ENCODE measurements at regions of chr12 and their contacts with region 1.

Region 1: GRCh38 chr12:124044809-124045321 is 71.8 kb downstream of the ZNF664 start:
- DNase-seq: peak in 1 of 2 donors; percentile 44
- H3K4me3 ChIP-seq: no peak overlapping the region
- H3K27ac ChIP-seq: no peak overlapping the region
- H3K4me1 ChIP-seq: peaks cover 0 to 8% (median 0%) of the 10 kb centered on the region in 4 donors
- H3K27me3 ChIP-seq: no peaks in the 10 kb centered on the region
- CTCF ChIP-seq: no peak
- EP300 ChIP-seq: no peak
- POLR2A ChIP-seq: no peak

Region 2: GRCh38 chr12:123948796-123949769 is 95.8 kb before region 1 on chr12:
- intact Hi-C with region 1: no loop called
- DNase-seq: no peak
- H3K4me3 ChIP-seq: no peak overlapping the region
- H3K27ac ChIP-seq: no peak overlapping the region
- H3K4me1 ChIP-seq: peaks cover 10 to 52% (median 26%) of the 10 kb centered on the region in 4 donors
- H3K27me3 ChIP-seq: no peaks in the 10 kb centered on the region
- CTCF ChIP-seq: no peak
- EP300 ChIP-seq: no peak
- POLR2A ChIP-seq: no peak

Region 3: DNA sequence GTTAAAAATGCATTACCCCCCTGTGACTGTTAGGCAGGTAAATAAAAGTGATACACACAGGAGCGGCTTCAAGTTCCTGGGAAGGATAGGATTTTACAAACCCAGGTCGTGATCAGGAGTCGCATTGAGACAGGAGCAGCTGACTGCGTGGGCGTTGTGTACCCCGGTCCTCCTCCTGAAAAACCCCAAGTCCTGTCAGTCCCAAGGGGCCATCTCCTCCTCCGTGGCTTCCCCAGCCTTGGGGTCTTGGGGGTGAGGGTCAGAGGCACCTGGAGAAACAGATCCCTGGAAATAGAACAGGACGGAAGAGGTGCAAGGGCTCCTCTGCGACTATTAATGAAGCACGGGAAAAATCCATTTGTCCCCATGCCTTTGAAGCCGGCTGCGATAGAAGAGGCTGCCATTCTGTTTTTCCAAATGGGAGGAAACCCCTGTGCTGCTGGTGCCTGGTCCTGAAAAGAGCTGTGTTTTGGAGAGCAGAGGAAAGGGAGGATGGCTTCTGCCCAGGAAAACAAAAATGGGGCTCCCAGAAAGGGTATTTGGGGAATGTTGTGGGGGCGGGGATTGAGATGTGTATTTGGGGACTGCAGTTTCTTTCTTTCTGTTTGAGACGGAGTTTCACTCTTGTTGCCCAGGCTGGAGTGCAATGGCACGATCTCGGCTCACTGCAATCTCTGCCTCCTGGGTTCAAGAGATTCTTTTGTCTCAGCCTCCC is 71.3 kb after region 1 on chr12:
- intact Hi-C with region 1: no loop called
- DNase-seq: no peak
- H3K4me3 ChIP-seq: no peak overlapping the region
- H3K27ac ChIP-seq: no peak overlapping the region
- H3K4me1 ChIP-seq: no peaks in the 10 kb centered on the region
- H3K27me3 ChIP-seq: no peaks in the 10 kb centered on the region
- CTCF ChIP-seq: no peak
- EP300 ChIP-seq: no peak
- POLR2A ChIP-seq: no peak

Region 4: GRCh38 chr12:124318295-124319020 is 273.6 kb after region 1 on chr12:
- intact Hi-C with region 1: loop called (anchors 5 kb)
- DNase-seq: peak in 1 of 2 donors; percentile 40
- H3K4me3 ChIP-seq: no peak overlapping the region
- H3K27ac ChIP-seq: peak overlapping the region in 2 of 5 donors; percentile 11 to 31
- H3K4me1 ChIP-seq: peaks cover 0 to 11% (median 5%) of the 10 kb centered on the region in 4 donors
- H3K27me3 ChIP-seq: no peaks in the 10 kb centered on the region
- CTCF ChIP-seq: no peak
- EP300 ChIP-seq: no peak
- POLR2A ChIP-seq: no peak

Measured in stomach (tissue), 19 donors.